ENCODE measurements at regions of chr11 and their contacts with region 1.

Region 1: DNA sequence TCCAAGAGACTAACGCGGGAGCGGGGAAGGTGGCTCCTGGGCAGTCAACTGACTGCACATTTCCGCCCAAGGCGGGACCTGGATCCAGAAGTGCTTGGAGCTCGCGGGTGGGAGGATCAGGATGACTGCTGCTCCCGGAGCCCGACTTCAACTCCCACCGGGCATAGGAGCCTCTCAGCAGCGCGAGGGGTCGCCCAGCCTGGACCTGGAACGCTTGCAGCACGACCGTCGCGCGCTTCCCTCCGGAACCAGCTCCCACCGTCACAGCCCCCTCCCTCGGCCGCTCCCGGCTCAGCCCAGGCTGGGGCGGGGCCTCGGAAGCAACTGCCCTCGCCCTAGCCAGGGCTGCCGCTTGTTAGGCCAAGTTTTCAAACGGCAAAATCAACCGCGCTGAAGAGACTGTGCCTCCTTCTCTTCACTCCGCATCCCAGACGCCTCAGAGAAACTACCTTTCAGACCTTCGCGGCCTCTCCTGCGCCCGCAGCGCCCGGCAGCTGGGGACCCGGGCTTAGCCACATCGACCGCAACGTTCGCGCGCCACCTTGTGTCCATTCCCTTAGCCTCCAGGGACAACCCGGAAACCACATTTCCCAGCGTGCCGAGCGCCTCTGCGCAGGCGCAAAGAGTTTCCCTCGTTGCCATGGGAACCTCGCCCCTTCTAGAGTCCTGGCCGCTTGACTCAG is 14.0 kb downstream of the SSH3 start:
- DNase-seq: peak; percentile 96 to 99 (median 98)
- ATAC-seq: peak; percentile 76
- H3K4me3 ChIP-seq: peak overlapping the region; percentile 68 to 82
- H3K4me3 Mint-ChIP-seq: peak overlapping the region; percentile 97
- H3K27ac ChIP-seq: peak overlapping the region; percentile 63 to 73
- H3K27ac Mint-ChIP-seq: peak overlapping the region; percentile 94
- H3K4me1 ChIP-seq: peaks cover 23% of the 10 kb centered on the region
- H3K4me1 Mint-ChIP-seq: peaks cover 32% of the 10 kb centered on the region
- H3K27me3 ChIP-seq: no peaks in the 10 kb centered on the region
- H3K27me3 Mint-ChIP-seq: no peaks in the 10 kb centered on the region
- CTCF ChIP-seq: peak; percentile 70

Region 2: DNA sequence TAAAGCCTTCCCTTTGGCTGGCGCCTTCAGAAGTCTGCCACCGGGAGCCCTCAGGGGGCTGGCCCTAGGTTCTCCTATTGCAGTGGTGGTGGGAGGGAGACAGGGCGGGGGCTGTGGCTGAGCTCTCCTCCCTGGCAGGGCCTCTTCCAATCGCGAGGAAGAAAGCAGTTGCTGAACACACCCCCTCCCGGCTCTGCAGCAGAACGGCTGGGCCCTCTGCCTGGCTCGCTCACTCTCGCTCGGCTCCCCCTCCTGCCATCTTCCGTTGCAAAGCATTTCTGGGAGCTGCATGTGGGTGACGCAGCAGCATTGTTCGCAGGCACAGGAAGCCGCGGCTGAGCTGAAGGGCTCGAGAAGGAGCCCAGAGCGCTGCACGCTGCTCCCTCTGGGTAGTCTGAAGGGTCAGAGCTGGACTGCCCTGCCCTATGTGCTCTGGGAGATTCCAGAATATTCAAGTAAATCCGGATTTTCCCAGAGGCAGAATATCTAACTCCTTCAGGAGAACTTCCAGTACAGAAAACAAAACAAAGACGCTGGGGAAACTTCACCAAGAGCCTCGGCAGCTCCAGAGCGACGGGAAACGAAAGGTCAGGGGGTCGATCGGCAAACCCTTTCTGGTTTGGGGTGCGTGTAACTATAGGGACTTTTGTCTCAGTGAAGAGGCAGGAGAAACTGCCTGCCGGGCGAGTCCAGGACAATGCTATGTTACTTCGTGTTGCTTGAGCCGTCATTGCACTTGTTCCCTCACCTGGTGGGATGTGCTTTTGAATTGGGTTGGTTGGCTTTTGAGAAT is 77.4 kb before region 1 on chr11:
- CTCF ChIA-PET with region 1: interaction called, 3 read pairs
- POLR2A ChIA-PET with region 1: interaction called, 10 read pairs
- intact Hi-C with region 1: loop called in 1 of 2 experiments (anchors 1 kb)
- DNase-seq: peak; percentile 89 to 99 (median 95)
- ATAC-seq: peak; percentile 89
- H3K4me3 ChIP-seq: peak overlapping the region; percentile 87 to 98
- H3K4me3 Mint-ChIP-seq: peak overlapping the region; percentile 96
- H3K27ac ChIP-seq: peak overlapping the region; percentile 95 to 96
- H3K27ac Mint-ChIP-seq: peak overlapping the region; percentile 100
- H3K4me1 ChIP-seq: peaks cover 40% of the 10 kb centered on the region
- H3K4me1 Mint-ChIP-seq: peaks cover 56% of the 10 kb centered on the region
- H3K27me3 ChIP-seq: no peaks in the 10 kb centered on the region
- H3K27me3 Mint-ChIP-seq: no peaks in the 10 kb centered on the region
- CTCF ChIP-seq: no peak

Region 3: DNA sequence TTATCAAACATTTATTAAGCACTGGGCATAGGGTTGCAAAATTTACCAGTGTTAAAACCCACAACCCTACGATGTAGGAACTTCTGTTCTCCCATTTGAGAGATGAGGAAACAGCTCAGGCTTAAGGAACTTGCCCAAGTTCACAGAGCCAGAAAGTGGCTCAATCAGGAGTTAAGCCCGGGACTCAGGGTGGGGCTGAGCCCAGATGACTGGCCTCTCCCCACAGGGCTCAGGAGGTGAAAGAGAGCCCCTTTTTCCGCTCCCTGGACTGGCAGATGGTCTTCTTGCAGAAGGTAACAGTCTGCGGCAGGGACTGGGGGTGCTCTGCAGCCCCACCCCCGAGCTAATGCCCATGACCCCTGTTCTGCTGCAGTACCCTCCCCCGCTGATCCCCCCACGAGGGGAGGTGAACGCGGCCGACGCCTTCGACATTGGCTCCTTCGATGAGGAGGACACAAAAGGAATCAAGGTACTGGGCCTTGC is 33.8 kb before region 1 on chr11:
- CTCF ChIA-PET with region 1: interaction called, 16 read pairs
- POLR2A ChIA-PET with region 1: interaction called, 33 read pairs
- intact Hi-C with region 1: no loop called
- DNase-seq: peak in 1 of 9 experiments; percentile 12
- ATAC-seq: no peak
- H3K4me3 ChIP-seq: no peak overlapping the region
- H3K4me3 Mint-ChIP-seq: no peak overlapping the region
- H3K27ac ChIP-seq: no peak overlapping the region
- H3K27ac Mint-ChIP-seq: peak overlapping the region; percentile 55
- H3K4me1 ChIP-seq: peaks cover 85% of the 10 kb centered on the region
- H3K4me1 Mint-ChIP-seq: peaks cover 48% of the 10 kb centered on the region
- H3K27me3 ChIP-seq: no peaks in the 10 kb centered on the region
- H3K27me3 Mint-ChIP-seq: no peaks in the 10 kb centered on the region
- CTCF ChIP-seq: no peak

Region 4: GRCh38 chr11:67295846-67296245 is 21.5 kb before region 1 on chr11:
- CTCF ChIA-PET with region 1: interaction called, 13 read pairs
- POLR2A ChIA-PET with region 1: interaction called, 9 read pairs
- intact Hi-C with region 1: no loop called
- DNase-seq: peak in 1 of 9 experiments; percentile 40
- ATAC-seq: no peak
- H3K4me3 ChIP-seq: no peak overlapping the region
- H3K4me3 Mint-ChIP-seq: no peak overlapping the region
- H3K27ac ChIP-seq: no peak overlapping the region
- H3K27ac Mint-ChIP-seq: no peak overlapping the region
- H3K4me1 ChIP-seq: peaks cover 31% of the 10 kb centered on the region
- H3K4me1 Mint-ChIP-seq: peaks cover 33% of the 10 kb centered on the region
- H3K27me3 ChIP-seq: no peaks in the 10 kb centered on the region
- H3K27me3 Mint-ChIP-seq: no peaks in the 10 kb centered on the region
- CTCF ChIP-seq: no peak

Region 5: DNA sequence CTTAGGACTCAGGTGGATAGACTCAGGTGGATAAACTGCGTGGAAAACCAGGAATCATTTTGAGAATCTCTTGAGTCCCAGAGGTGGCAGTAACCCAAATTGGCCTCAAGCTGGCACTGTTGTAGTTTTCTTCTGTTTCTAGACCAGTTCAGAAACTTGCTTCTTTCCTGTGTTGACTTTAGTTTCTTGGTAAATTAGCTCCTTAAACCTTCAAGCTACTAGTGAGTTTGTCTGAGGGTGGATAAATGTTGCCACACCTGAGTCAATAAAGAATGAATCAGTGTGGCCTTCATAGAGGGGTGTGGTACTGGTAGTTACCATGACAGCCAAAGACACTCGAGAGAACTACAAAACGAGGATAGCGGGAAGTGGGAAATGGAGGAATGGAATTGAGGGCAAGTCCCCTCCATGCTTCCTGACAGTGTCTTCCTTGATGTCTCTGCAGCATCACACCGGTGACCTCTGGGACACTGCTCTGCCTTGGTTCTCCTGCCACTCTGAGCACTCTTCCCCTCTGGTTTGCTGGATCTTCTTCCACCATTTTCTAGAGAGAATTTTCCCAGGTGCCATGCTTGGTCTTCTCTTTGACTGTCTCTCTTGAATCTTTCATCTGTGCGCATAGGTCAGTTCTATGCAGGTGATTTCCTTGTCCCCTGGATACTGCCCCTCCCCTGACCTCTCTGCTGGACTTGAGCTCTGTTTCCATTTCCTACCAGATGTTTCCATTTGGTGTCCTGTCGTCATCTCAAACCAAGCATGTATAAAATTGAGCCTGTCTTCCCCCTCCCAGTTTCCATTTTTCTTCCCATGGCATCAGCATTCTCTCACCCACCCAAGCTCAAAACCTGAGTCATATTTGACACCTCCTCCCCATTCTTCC is 28.8 kb after region 1 on chr11:
- CTCF ChIA-PET with region 1: interaction called, 88 read pairs
- POLR2A ChIA-PET with region 1: no interaction called
- intact Hi-C with region 1: no loop called
- DNase-seq: peak in 2 of 9 experiments; percentile 44 to 60
- ATAC-seq: peak; percentile 75
- H3K4me3 ChIP-seq: no peak overlapping the region
- H3K4me3 Mint-ChIP-seq: peak overlapping the region; percentile 42
- H3K27ac ChIP-seq: no peak overlapping the region
- H3K27ac Mint-ChIP-seq: peak overlapping the region; percentile 76
- H3K4me1 ChIP-seq: peaks cover 40% of the 10 kb centered on the region
- H3K4me1 Mint-ChIP-seq: peaks cover 53% of the 10 kb centered on the region
- H3K27me3 ChIP-seq: no peaks in the 10 kb centered on the region
- H3K27me3 Mint-ChIP-seq: no peaks in the 10 kb centered on the region
- CTCF ChIP-seq: peak; percentile 70

Measured in CD8-positive, alpha-beta T cell (primary cell).